HepG2 (cell line): ENCODE measurements at regions of chr11 and their contacts with region 1.

Region 1: DNA sequence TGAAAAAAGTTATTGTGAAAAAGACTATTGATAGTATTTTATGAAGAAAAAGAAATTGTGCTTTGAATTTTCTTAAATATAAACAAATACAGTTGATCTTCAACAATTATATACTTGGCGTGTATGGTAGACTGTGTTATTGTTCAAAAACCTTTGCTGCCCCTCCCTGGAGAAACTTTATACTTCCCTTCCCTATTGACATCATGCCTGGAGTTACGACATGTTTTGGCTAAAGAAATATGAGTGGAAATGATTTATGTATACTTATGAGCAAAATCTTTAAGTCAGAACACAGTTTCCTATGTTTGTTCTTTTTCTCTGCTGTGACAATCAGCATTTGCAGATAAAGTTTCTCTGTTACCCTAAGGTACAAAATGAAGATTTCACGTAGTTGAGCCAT is 243.8 kb downstream of the TMEM135 start:
- DNase-seq: peak; percentile 7
- ATAC-seq: no peak
- H3K4me3 ChIP-seq: no peak overlapping the region
- H3K27ac ChIP-seq: no peak overlapping the region
- H3K4me1 ChIP-seq: peaks cover 16% of the 10 kb centered on the region
- H3K27me3 ChIP-seq: no peaks in the 10 kb centered on the region
- CTCF ChIP-seq: 0 out of 2 replicates have a peak, but pooled peaks have one; percentile 15
- EP300 ChIP-seq: no peak
- POLR2A ChIP-seq: no peak
- RAD21 ChIP-seq: no peak

Region 2: DNA sequence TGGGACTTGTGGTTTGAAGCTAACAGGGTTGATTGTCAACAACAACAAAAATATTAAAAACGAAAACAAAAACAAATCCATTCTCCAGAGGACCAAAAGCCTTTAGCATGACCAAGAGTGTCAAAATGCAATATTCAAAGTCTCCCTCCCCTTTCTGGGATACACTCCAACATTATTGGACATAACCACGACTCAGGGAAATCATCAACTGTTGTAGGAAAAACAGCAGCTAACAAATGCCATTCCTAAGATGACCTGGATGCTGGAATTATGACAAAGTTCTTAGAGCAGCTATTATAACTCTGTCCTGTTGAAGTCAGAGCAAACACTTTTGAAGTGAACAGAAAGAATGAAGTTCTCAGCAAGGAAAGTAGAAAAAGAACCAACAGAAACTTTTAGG is 100.8 kb before region 1 on chr11:
- CTCF ChIA-PET with region 1: no interaction called
- POLR2A ChIA-PET with region 1: no interaction called
- in situ Hi-C with region 1: no loop called
- intact Hi-C with region 1: loop called (anchors 10 kb)
- DNase-seq: no peak
- ATAC-seq: no peak
- H3K4me3 ChIP-seq: no peak overlapping the region
- H3K27ac ChIP-seq: no peak overlapping the region
- H3K4me1 ChIP-seq: peaks cover 19% of the 10 kb centered on the region
- H3K27me3 ChIP-seq: no peaks in the 10 kb centered on the region
- CTCF ChIP-seq: no peak
- EP300 ChIP-seq: no peak
- POLR2A ChIP-seq: no peak
- RAD21 ChIP-seq: no peak